Mammary epithelial cell (primary cell): ENCODE measurements at regions of chr17 and their contacts with region 1.

Region 1: DNA sequence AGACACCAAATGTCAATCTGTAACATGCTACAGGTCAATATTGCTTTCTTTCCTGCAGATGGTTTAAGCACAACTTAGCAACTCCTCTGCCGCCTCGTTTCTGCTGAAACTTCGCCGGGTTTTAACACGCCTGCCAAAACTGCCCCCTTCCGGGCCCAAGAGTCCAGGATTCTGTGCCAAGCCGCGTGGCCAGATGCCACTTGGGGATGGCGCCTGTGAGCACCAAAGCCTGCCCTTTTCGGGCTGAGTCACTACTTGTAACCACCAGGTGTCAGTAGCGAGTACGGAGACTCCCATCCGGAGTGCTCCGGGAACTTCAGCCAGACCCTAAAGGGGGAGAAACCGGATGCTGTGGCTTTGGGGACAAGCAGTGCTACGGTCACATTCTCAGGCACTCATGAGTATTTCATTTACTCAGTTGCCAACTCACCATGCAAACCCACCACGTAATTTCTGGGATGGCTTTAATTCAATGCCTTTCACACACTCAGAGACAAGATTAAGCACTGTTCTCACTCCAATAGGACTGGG is 7.8 kb downstream of the PMP22 start:
- DNase-seq: peak; percentile 58
- H3K4me3 ChIP-seq: no peak overlapping the region
- H3K27ac ChIP-seq: no peak overlapping the region
- H3K4me1 ChIP-seq: peaks cover 44% of the 10 kb centered on the region
- H3K27me3 ChIP-seq: no peaks in the 10 kb centered on the region
- CTCF ChIP-seq: peak; percentile 84 to 90

Region 2: DNA sequence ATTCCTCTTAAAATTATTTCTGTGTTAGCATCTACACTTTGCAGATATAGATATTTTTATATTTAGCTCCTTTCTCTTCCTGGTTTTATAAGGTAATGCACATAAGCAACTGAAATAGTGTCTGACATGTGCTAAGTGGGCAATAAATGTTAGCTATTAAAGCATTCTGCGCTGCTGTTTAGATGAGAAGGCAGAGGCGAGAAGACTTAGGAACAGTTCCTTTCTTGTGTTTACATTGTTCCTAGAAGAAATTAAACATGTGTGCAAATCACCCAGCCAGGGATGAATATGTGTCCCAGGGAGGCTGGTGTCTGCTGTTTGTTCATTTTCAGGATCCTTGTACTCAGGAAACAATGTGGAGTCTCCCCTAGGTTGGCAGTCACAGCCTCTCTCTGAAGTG is 284.5 kb before region 1 on chr17:
- CTCF ChIA-PET with region 1: no interaction called
- dilution Hi-C with region 1: no loop called
- in situ Hi-C with region 1: no loop called
- intact Hi-C with region 1: no loop called
- DNase-seq: no peak
- H3K4me3 ChIP-seq: no peak overlapping the region
- H3K27ac ChIP-seq: no peak overlapping the region
- H3K4me1 ChIP-seq: no peaks in the 10 kb centered on the region
- H3K27me3 ChIP-seq: peaks cover 2% of the 10 kb centered on the region
- CTCF ChIP-seq: no peak

Region 3: GRCh38 chr17:15377616-15378015 is 120.3 kb after region 1 on chr17:
- CTCF ChIA-PET with region 1: no interaction called
- dilution Hi-C with region 1: no loop called
- in situ Hi-C with region 1: no loop called
- intact Hi-C with region 1: loop called (anchors 1 kb)
- DNase-seq: no peak
- H3K4me3 ChIP-seq: no peak overlapping the region
- H3K27ac ChIP-seq: no peak overlapping the region
- H3K4me1 ChIP-seq: peaks cover 12% of the 10 kb centered on the region
- H3K27me3 ChIP-seq: no peaks in the 10 kb centered on the region
- CTCF ChIP-seq: no peak

Region 4: GRCh38 chr17:15409721-15410250 is 152.5 kb after region 1 on chr17:
- CTCF ChIA-PET with region 1: no interaction called
- dilution Hi-C with region 1: no loop called
- in situ Hi-C with region 1: loop called (anchors 5 to 25 kb)
- intact Hi-C with region 1: loop called (anchors 1 kb)
- DNase-seq: peak; percentile 95
- H3K4me3 ChIP-seq: peak overlapping the region in 1 of 3 experiments; percentile 3
- H3K27ac ChIP-seq: peak overlapping the region; percentile 66
- H3K4me1 ChIP-seq: peaks cover 28% of the 10 kb centered on the region
- H3K27me3 ChIP-seq: no peaks in the 10 kb centered on the region
- CTCF ChIP-seq: no peak

Region 5: DNA sequence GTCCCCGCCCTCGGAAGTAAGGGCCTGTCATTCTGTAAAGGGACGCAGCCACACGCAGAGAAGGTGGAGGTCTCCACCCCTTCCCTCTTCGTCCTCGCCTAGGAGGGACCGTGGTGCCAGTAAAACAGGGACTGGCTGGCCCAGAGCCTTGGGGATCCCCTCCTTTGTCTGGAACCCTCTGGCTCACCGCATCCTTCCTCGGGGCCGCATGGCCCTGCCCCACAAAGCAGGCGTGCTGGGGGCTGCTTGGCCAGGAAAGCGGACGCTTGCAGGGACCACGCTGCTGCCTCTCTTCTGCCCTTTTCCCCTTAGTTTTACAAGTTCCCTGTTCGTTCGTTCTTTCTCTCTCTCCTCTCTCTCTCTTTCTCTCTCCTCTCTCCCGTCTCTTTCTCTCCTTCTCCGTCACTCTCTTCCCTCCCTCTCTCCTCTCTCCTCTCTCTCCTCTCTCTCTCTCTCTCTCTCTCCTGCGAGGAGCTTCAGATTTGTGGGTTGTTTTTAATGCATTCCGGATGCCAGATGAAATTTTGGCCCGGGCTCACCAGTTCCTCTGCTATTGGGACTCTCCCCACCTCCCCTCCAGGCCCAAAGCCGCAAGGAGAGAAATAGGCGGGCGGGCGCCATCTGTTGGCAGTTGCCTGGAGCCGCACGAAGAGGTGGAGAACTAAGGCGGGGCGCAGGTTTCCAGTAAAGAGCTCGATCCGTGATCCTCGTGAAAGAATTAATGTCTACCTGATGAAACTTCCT is 245.2 kb after region 1 on chr17:
- CTCF ChIA-PET with region 1: interaction called, 5 read pairs
- dilution Hi-C with region 1: no loop called
- in situ Hi-C with region 1: loop called (anchors 10 kb)
- intact Hi-C with region 1: loop called (anchors 1 kb)
- DNase-seq: peak; percentile 66
- H3K4me3 ChIP-seq: no peak overlapping the region
- H3K27ac ChIP-seq: no peak overlapping the region
- H3K4me1 ChIP-seq: peaks cover 6% of the 10 kb centered on the region
- H3K27me3 ChIP-seq: no peaks in the 10 kb centered on the region
- CTCF ChIP-seq: peak; percentile 86 to 91

Region 6: GRCh38 chr17:15999439-16000350 is 742.4 kb after region 1 on chr17 and contains the starts of genes TTC19 and ZSWIM7:
- CTCF ChIA-PET with region 1: no interaction called
- dilution Hi-C with region 1: no loop called
- in situ Hi-C with region 1: loop called in 1 of 2 experiments (anchors 25 kb)
- intact Hi-C with region 1: no loop called
- DNase-seq: peak; percentile 97
- H3K4me3 ChIP-seq: peak within 1 kb of the TSS; percentile 78 to 97 (median 79)
- H3K27ac ChIP-seq: peak within 1 kb of the TSS; percentile 87
- H3K4me1 ChIP-seq: peaks cover 22% of the 10 kb centered on the region
- H3K27me3 ChIP-seq: no peaks in the 10 kb centered on the region
- CTCF ChIP-seq: peak in 1 of 2 donors; percentile 23
- total RNA-seq, gene TTC19: 48.0 to 76.8 TPM
- total RNA-seq, gene ZSWIM7: 12.2 to 21.2 TPM